IMR-90 (cell line): ENCODE measurements at regions of chr10 and their contacts with region 1.

Region 1: DNA sequence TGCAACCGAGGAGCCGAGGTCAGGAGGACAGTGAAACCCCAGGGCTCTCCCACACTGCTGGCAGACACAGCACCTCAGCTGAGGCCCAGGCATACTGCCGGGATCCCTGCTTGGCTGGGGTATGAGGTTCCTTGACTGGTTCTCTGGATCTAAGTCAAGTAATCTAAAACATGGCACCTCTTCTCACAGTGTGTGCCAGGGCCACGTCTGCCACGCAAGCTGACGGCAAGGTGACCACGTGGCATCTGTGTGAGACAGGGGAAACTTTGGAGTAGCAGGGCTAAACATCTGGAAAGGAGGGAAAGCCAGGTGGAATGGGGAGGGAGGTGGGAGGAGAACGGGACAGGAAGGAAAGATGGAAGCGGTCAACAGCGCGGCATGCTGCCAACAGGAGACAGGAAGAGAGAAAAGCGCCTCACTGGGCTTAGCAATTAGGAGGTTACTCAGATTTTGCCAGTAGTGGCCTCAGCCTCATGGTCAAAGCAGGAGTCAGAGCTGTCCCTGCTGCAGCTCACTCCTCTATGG is 103.7 kb downstream of the CXCL12 start:
- DNase-seq: no peak
- ATAC-seq: no peak
- H3K4me3 ChIP-seq: no peak overlapping the region
- H3K27ac ChIP-seq: no peak overlapping the region
- H3K4me1 ChIP-seq: peaks cover 2% of the 10 kb centered on the region; the same call in 1 of the 2 replicates
- H3K27me3 ChIP-seq: peaks cover 12% of the 10 kb centered on the region
- CTCF ChIP-seq: no peak
- POLR2A ChIP-seq: no peak
- RAD21 ChIP-seq: no peak

Region 2: GRCh38 chr10:44463511-44464121 is 182.5 kb after region 1 on chr10:
- CTCF ChIA-PET with region 1: no interaction called
- POLR2A ChIA-PET with region 1: no interaction called
- dilution Hi-C with region 1: no loop called
- in situ Hi-C with region 1: no loop called
- intact Hi-C with region 1: no loop called
- DNase-seq: no peak
- ATAC-seq: no peak
- H3K4me3 ChIP-seq: no peak overlapping the region
- H3K27ac ChIP-seq: no peak overlapping the region
- H3K4me1 ChIP-seq: peaks cover 5% of the 10 kb centered on the region
- H3K27me3 ChIP-seq: peaks cover 7% of the 10 kb centered on the region
- CTCF ChIP-seq: no peak
- POLR2A ChIP-seq: no peak
- RAD21 ChIP-seq: no peak

Region 3: GRCh38 chr10:45302573-45302972 is 1021.4 kb after region 1 on chr10:
- CTCF ChIA-PET with region 1: no interaction called
- POLR2A ChIA-PET with region 1: no interaction called
- dilution Hi-C with region 1: no loop called
- in situ Hi-C with region 1: no loop called
- intact Hi-C with region 1: no loop called
- DNase-seq: no peak
- ATAC-seq: no peak
- H3K4me3 ChIP-seq: no peak overlapping the region
- H3K27ac ChIP-seq: no peak overlapping the region
- H3K4me1 ChIP-seq: no peaks in the 10 kb centered on the region
- H3K27me3 ChIP-seq: no peaks in the 10 kb centered on the region; the same call in 1 of the 2 replicates
- CTCF ChIP-seq: no peak
- POLR2A ChIP-seq: no peak
- RAD21 ChIP-seq: no peak

Region 4: DNA sequence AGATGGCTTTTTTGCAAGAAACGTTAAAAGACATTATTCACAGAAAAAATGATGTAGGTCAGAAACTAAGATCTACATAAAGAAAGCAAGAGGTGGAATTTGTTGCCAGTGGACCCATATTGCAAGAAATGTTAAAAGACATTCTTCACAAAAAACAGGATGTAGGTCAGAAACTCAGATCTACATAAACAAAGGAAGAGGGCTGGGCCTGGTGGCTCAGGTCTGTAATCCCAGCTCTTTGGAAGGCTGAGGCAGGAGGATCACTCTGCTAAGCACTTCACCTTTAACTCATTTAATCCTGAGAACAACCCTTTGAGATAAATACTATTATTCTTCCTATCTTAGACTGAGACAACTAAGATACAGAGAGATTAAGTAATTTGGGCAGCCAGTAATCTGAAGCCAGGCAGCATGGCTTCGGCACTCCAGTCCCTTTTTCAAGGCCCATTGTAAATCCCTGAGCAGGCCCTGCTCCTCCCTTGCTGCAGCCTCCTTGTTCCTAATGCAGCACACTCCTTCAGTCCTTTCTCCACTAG is 1379.8 kb after region 1 on chr10:
- CTCF ChIA-PET with region 1: no interaction called
- POLR2A ChIA-PET with region 1: interaction called, 14 read pairs
- dilution Hi-C with region 1: no loop called
- in situ Hi-C with region 1: no loop called
- intact Hi-C with region 1: no loop called
- DNase-seq: no peak
- ATAC-seq: no peak
- H3K4me3 ChIP-seq: no peak overlapping the region
- H3K27ac ChIP-seq: no peak overlapping the region
- H3K4me1 ChIP-seq: no peaks in the 10 kb centered on the region
- H3K27me3 ChIP-seq: no peaks in the 10 kb centered on the region
- CTCF ChIP-seq: no peak
- POLR2A ChIP-seq: no peak
- RAD21 ChIP-seq: no peak